Right lobe of liver (tissue), 6 donors: ENCODE measurements at regions of chr1 and their contacts with region 1.

Region 1: GRCh38 chr1:160193091-160193819 is 2.9 kb downstream of the CASQ1 start:
- DNase-seq: peak; percentile 76 to 85 (median 84)
- ATAC-seq: peak; percentile 92 to 99 (median 96)
- H3K4me3 ChIP-seq: no peak overlapping the region
- H3K27ac ChIP-seq: no peak overlapping the region
- H3K4me1 ChIP-seq: peaks cover 0 to 5% (median 0%) of the 10 kb centered on the region in 4 donors
- H3K27me3 ChIP-seq: no peaks in the 10 kb centered on the region
- CTCF ChIP-seq: peak; percentile 92 to 98 (median 96)
- POLR2A ChIP-seq: no peak

Region 2: GRCh38 chr1:160251687-160252526 is 58.7 kb after region 1 on chr1:
- intact Hi-C with region 1: loop called in 1 of 2 experiments (anchors 10 kb)
- DNase-seq: peak in 2 of 3 donors; percentile 49 to 79
- ATAC-seq: peak; percentile 92 to 99 (median 96)
- H3K4me3 ChIP-seq: no peak overlapping the region
- H3K27ac ChIP-seq: peak overlapping the region in 2 of 3 donors; percentile 59 to 65
- H3K4me1 ChIP-seq: peaks cover 0 to 39% (median 10%) of the 10 kb centered on the region in 4 donors
- H3K27me3 ChIP-seq: no peaks in the 10 kb centered on the region
- CTCF ChIP-seq: peak; percentile 81 to 91 (median 84)
- POLR2A ChIP-seq: no peak

Region 3: GRCh38 chr1:160291248-160292220 is 98.3 kb after region 1 on chr1:
- intact Hi-C with region 1: loop called in 1 of 2 experiments (anchors 5 kb)
- DNase-seq: peak; percentile 31 to 67 (median 57)
- ATAC-seq: peak; percentile 84 to 89 (median 86)
- H3K4me3 ChIP-seq: no peak overlapping the region
- H3K27ac ChIP-seq: peak overlapping the region in 1 of 3 donors; percentile 5
- H3K4me1 ChIP-seq: peaks cover 0 to 23% (median 0%) of the 10 kb centered on the region in 4 donors
- H3K27me3 ChIP-seq: no peaks in the 10 kb centered on the region
- CTCF ChIP-seq: peak; percentile 75 to 88 (median 82)
- POLR2A ChIP-seq: no peak

Region 4: GRCh38 chr1:160362168-160362957 is 169.1 kb after region 1 on chr1:
- intact Hi-C with region 1: loop called in 1 of 2 experiments (anchors 10 kb)
- DNase-seq: no peak
- ATAC-seq: no peak
- H3K4me3 ChIP-seq: no peak overlapping the region
- H3K27ac ChIP-seq: no peak overlapping the region
- H3K4me1 ChIP-seq: no peaks in the 10 kb centered on the region
- H3K27me3 ChIP-seq: no peaks in the 10 kb centered on the region
- CTCF ChIP-seq: no peak
- POLR2A ChIP-seq: no peak